HCT116 (cell line): ENCODE measurements at regions of chr14 and their contacts with region 1.

Region 1: GRCh38 chr14:90399541-90400444 is 3.0 kb downstream of the CALM1 start:
- DNase-seq: peak; percentile 81
- ATAC-seq: peak; percentile 60
- H3K4me3 ChIP-seq: peak overlapping the region in 1 of 2 experiments; percentile 96; a peak in 2 of 4 replicates
- H3K27ac ChIP-seq: no peak overlapping the region
- H3K4me1 ChIP-seq: peaks cover 13 to 23% of the 10 kb centered on the region in 2 experiments
- H3K27me3 ChIP-seq: no peaks in the 10 kb centered on the region
- CTCF ChIP-seq: peak; percentile 100
- POLR2A ChIP-seq: no peak
- RAD21 ChIP-seq: peak; percentile 89

Region 2: GRCh38 chr14:90301668-90302090 is 98.1 kb before region 1 on chr14:
- CTCF ChIA-PET with region 1: interaction called, 7 read pairs
- POLR2A ChIA-PET with region 1: interaction called, 10 read pairs
- RAD21 ChIA-PET with region 1: no interaction called
- intact Hi-C with region 1: no loop called
- DNase-seq: no peak
- ATAC-seq: no peak
- H3K4me3 ChIP-seq: no peak overlapping the region
- H3K27ac ChIP-seq: no peak overlapping the region
- H3K4me1 ChIP-seq: peaks cover 0 to 7% of the 10 kb centered on the region in 2 experiments; a peak in 1 of 4 replicates
- H3K27me3 ChIP-seq: no peaks in the 10 kb centered on the region
- CTCF ChIP-seq: peak; percentile 22 to 45 (median 43); a peak in 4 of 6 replicates
- POLR2A ChIP-seq: no peak
- RAD21 ChIP-seq: peak; percentile 77

Region 3: GRCh38 chr14:90331497-90332435 is 68.0 kb before region 1 on chr14 and contains the start of gene NRDE2:
- CTCF ChIA-PET with region 1: no interaction called
- POLR2A ChIA-PET with region 1: no interaction called
- RAD21 ChIA-PET with region 1: no interaction called
- intact Hi-C with region 1: loop called (anchors 5 kb)
- DNase-seq: peak; percentile 90
- ATAC-seq: peak; percentile 97
- H3K4me3 ChIP-seq: peak within 1 kb of the TSS; percentile 69 to 73
- H3K27ac ChIP-seq: peak within 1 kb of the TSS; percentile 81
- H3K4me1 ChIP-seq: peaks cover 13 to 16% of the 10 kb centered on the region in 2 experiments; a peak in 3 of 4 replicates
- H3K27me3 ChIP-seq: 0 out of 2 replicates have a peak, but pooled peaks cover 5% of the 10 kb centered on the region
- CTCF ChIP-seq: no peak
- POLR2A ChIP-seq: peak; percentile 79
- RAD21 ChIP-seq: no peak
- total RNA-seq, gene NRDE2: 20.1 TPM

Region 4: GRCh38 chr14:90383075-90383730 is 16.6 kb before region 1 on chr14:
- CTCF ChIA-PET with region 1: interaction called, 5 read pairs
- POLR2A ChIA-PET with region 1: interaction called, 6 read pairs
- RAD21 ChIA-PET with region 1: interaction called in 1 of 2 experiments, 6 read pairs
- intact Hi-C with region 1: loop called (anchors 1 kb)
- DNase-seq: peak; percentile 99
- ATAC-seq: peak; percentile 98
- H3K4me3 ChIP-seq: peak overlapping the region; percentile 81 to 86
- H3K27ac ChIP-seq: peak overlapping the region; percentile 70
- H3K4me1 ChIP-seq: peaks cover 11 to 23% of the 10 kb centered on the region in 2 experiments
- H3K27me3 ChIP-seq: no peaks in the 10 kb centered on the region
- CTCF ChIP-seq: no peak
- POLR2A ChIP-seq: peak; percentile 29
- RAD21 ChIP-seq: no peak

Region 5: GRCh38 chr14:90518941-90519256 is 119.1 kb after region 1 on chr14:
- CTCF ChIA-PET with region 1: interaction called, 9 read pairs
- POLR2A ChIA-PET with region 1: interaction called, 4 read pairs
- RAD21 ChIA-PET with region 1: interaction called in 1 of 2 experiments, 4 read pairs
- intact Hi-C with region 1: loop called (anchors 1 kb)
- DNase-seq: peak; percentile 37
- ATAC-seq: peak; percentile 77
- H3K4me3 ChIP-seq: no peak overlapping the region
- H3K27ac ChIP-seq: no peak overlapping the region
- H3K4me1 ChIP-seq: peaks cover 39 to 50% of the 10 kb centered on the region in 2 experiments
- H3K27me3 ChIP-seq: no peaks in the 10 kb centered on the region
- CTCF ChIP-seq: peak; percentile 80 to 88 (median 86)
- POLR2A ChIP-seq: no peak
- RAD21 ChIP-seq: peak; percentile 86

Region 6: DNA sequence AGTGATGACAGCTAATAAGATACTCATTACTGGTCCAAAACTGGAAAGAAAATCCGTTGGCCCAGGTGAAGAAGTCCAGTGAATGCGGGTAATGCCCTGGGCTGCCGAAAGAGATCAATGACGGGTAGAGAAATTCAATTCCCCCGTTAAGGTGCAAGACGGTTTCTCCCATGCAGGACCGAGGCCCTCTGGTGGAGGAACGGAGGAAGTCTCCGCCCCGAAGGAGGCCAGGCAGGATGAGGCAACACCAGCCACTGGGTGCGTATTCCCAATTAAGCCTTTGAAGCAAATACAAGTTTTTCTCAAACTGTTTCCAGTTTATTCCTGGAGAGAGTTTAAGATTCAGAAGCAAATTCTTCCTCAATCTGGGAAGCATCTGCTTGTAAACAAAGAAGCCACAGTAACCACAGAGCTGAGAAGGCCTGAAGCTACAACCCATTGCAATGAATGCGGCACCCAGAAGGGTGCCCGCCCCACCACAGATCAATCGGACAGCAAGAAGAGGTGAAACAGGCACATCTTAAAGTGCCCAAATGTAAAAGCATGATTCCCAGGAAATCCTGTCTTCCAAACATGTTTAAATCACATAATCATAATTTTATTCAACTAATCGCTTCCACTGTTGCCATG is 297.9 kb after region 1 on chr14:
- CTCF ChIA-PET with region 1: interaction called, 12 read pairs
- POLR2A ChIA-PET with region 1: interaction called, 3 read pairs
- RAD21 ChIA-PET with region 1: interaction called in 1 of 2 experiments, 3 read pairs
- intact Hi-C with region 1: loop called (anchors 1 kb)
- DNase-seq: peak; percentile 58
- ATAC-seq: peak; percentile 99
- H3K4me3 ChIP-seq: no peak overlapping the region
- H3K27ac ChIP-seq: no peak overlapping the region
- H3K4me1 ChIP-seq: peaks cover 2 to 8% of the 10 kb centered on the region in 2 experiments; a peak in 2 of 4 replicates
- H3K27me3 ChIP-seq: no peaks in the 10 kb centered on the region
- CTCF ChIP-seq: peak; percentile 91 to 95 (median 94)
- POLR2A ChIP-seq: no peak
- RAD21 ChIP-seq: peak; percentile 93